HepG2 (cell line): ENCODE measurements at regions of chr1 and their contacts with region 1.

Region 1: GRCh38 chr1:33378976-33379375 is 51.9 kb downstream of the PHC2 start:
- DNase-seq: no peak
- ATAC-seq: no peak; the same call in 2 of the 3 replicates
- H3K4me3 ChIP-seq: no peak overlapping the region
- H3K27ac ChIP-seq: no peak overlapping the region
- H3K4me1 ChIP-seq: no peaks in the 10 kb centered on the region
- H3K27me3 ChIP-seq: peaks cover 3 to 7% of the 10 kb centered on the region in 2 experiments; a peak in 3 of 5 replicates
- CTCF ChIP-seq: no peak
- EP300 ChIP-seq: no peak
- POLR2A ChIP-seq: no peak
- RAD21 ChIP-seq: no peak

Region 2: DNA sequence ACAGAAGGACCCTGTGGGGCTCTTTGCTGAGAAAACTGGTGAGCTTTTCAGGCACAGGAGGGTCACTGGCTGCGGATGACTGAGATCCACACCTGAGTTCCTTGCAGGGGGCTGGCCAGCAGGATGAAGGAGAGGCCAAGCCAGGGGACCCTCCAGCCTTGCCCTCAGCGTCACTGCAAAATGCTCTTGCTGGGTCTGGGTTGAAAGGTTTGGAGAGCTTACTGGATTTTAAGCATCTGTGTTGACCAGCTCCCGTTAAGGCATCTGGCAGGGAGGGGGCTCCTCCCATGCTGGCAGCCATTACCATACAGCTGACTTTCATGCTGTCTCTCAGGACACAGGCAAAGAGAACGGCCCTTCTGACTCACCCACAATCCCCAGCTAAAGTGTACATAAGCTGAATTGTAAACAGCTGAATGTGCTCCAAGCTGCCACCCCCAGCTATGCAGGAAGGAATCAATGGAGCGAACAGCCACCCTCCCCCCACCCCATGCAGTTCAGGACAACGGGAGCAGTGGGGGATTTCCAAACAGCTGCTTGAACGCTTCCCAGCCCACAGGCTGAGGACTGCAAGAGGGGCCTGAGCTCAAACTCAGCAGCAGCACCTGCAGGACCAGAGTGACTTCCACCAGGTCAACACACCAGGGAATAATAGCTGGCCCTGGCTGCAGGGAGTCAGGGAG is 36.8 kb before region 1 on chr1:
- CTCF ChIA-PET with region 1: no interaction called
- POLR2A ChIA-PET with region 1: no interaction called
- in situ Hi-C with region 1: no loop called
- intact Hi-C with region 1: no loop called
- DNase-seq: peak; percentile 97
- ATAC-seq: peak; percentile 90
- H3K4me3 ChIP-seq: peak overlapping the region in 2 of 3 experiments; percentile 18 to 57; a peak in 3 of 6 replicates
- H3K27ac ChIP-seq: peak overlapping the region; percentile 61
- H3K4me1 ChIP-seq: peaks cover 100% of the 10 kb centered on the region
- H3K27me3 ChIP-seq: no peaks in the 10 kb centered on the region
- CTCF ChIP-seq: peak; percentile 43
- EP300 ChIP-seq: peak; percentile 28 to 86; a peak in 2 of 4 replicates
- POLR2A ChIP-seq: peak; percentile 13 to 60; a peak in 2 of 4 replicates
- RAD21 ChIP-seq: peak; percentile 58

Region 3: DNA sequence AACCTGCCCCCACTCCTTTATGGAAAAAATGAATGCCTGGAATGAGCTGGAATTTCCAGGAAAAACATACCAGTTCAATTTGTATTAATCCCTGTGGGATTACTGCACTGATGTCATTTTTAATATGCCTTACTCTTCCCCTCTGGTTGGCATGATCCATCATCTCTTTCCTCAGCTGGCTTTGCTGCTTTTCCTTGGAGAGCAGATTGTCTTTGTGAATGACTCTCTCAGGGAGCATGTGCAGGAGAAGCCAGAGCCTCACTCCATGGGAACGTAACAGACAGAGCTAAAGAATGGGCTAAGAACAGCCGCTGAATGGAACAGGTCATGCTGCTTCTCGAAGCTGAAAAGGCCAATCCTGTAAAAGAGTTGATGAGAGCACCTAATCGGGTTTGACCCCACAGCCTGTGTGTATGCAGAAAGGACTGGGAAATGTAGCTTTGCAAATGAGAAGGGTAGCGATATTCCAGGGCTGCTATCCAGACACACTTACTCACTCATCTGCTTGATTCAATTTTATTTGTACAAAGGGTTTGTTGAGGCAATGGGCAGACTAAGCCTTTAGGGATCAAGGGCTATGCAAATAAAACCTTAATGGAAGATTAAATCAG is 31.2 kb after region 1 on chr1:
- CTCF ChIA-PET with region 1: no interaction called
- POLR2A ChIA-PET with region 1: no interaction called
- in situ Hi-C with region 1: no loop called
- intact Hi-C with region 1: no loop called
- DNase-seq: no peak
- ATAC-seq: no peak
- H3K4me3 ChIP-seq: no peak overlapping the region
- H3K27ac ChIP-seq: no peak overlapping the region
- H3K4me1 ChIP-seq: no peaks in the 10 kb centered on the region
- H3K27me3 ChIP-seq: no peaks in the 10 kb centered on the region
- CTCF ChIP-seq: no peak
- EP300 ChIP-seq: no peak
- POLR2A ChIP-seq: no peak
- RAD21 ChIP-seq: no peak

Region 4: DNA sequence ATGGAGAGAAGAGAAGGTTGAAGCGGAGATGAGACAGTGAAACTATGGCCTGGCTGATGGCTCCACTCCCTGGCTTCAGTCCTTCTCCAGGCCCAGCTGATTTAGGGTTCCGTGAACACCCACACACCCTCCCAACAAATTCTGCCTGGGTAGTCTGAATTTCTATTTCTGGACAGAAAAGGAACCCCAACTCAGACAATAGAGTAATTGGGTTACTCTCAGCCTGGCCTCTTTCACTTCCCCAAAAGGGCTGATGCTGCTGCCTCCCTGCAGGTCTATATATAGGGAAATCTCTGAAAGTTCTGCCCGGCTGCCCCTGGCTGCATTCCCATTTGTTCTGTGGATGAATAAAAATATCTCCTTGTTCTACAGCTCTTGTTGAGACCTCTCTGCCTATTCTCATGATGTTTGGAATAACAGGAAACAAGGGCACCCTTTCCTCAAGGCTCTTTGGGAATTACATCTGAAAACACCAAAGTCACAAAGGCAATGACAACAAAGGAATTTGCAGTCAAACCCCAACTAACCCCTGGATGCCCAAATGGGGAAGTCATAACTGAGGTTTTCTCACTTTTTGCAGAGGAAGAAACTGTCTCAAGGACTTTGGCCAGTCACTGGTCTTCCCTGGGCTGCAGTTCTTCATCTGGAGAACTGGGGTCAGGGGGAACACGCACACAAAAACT is 82.1 kb after region 1 on chr1:
- CTCF ChIA-PET with region 1: no interaction called
- POLR2A ChIA-PET with region 1: no interaction called
- in situ Hi-C with region 1: loop called (anchors 10 kb)
- intact Hi-C with region 1: no loop called
- DNase-seq: no peak
- ATAC-seq: no peak
- H3K4me3 ChIP-seq: no peak overlapping the region
- H3K27ac ChIP-seq: no peak overlapping the region
- H3K4me1 ChIP-seq: no peaks in the 10 kb centered on the region
- H3K27me3 ChIP-seq: peaks cover 3 to 23% of the 10 kb centered on the region in 2 experiments; a peak in 2 of 5 replicates
- CTCF ChIP-seq: no peak
- EP300 ChIP-seq: no peak
- POLR2A ChIP-seq: no peak
- RAD21 ChIP-seq: no peak